Activated T-helper 1 cell treated with anti-CD3 and anti-CD28 coated beads, Interleukin-12 subunit alpha, Interleukin-12 subunit beta, Interleukin-2, Interleukin-4 antibody, amounts not matched to agents 30 ng/mL and 10 ng/mL and 1 ng/mL, durations not matched to agents 14 hours and 24 hours and 36 hours (primary cell): ENCODE measurements at regions of chr16 and their contacts with region 1.

Region 1: DNA sequence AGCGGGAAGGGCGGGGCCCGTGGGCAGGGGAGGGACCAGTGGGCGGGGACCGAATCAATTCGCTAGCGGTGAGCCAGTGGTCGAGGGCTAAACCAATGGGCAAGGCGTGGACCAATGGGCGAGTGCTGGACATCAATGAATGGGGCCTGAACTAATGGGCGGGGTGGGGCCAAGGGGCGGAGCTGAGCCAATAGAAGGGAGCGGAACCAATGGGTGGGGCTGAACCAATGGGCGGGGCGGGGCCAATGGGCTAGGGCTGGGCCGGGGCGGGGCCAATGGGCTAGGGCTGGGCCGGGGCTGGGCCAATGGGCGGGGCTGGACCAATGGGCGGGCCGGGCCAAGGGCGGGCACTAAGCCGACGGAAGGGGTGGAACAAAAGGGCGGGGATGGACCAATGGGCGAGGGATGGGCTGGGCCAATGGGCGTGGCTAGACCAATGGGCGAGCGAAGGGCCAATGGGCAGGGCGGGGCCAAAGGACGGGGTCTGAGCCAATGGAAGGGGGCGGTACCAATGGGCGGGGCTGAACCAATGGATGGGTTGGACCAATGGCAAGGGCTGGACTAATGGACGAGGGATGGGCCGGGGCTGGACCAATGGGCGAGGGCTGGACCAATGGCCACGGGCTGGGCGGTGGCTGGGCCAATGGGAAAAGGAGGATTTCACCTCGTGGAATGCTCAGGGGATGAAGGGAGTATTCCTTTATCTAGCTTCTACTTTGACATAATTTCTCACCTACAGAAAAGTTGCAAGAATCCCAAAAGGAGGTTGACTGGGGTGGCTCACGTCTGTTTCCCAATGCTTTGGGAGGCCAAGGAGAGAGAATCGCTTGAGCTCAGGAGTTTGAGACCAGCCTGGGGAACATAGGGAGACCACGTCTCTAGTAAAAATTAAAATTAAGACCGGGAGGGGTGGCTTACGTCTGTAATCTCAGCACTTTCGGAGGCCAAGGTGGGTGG is 6.0 kb upstream of the FLYWCH1 start:
- DNase-seq: peak; percentile 95
- H3K4me3 Mint-ChIP-seq: peak overlapping the region; percentile 91
- H3K27ac Mint-ChIP-seq: peak overlapping the region; percentile 44
- H3K4me1 Mint-ChIP-seq: peaks cover 17% of the 10 kb centered on the region
- H3K27me3 Mint-ChIP-seq: peaks cover 4% of the 10 kb centered on the region

Region 2: GRCh38 chr16:2682209-2683021 is 223.3 kb before region 1 on chr16 and contains the start of gene KCTD5:
- intact Hi-C with region 1: no loop called
- DNase-seq: peak; percentile 96
- H3K4me3 Mint-ChIP-seq: peak within 1 kb of the TSS; percentile 99
- H3K27ac Mint-ChIP-seq: peak within 1 kb of the TSS; percentile 97
- H3K4me1 Mint-ChIP-seq: peaks cover 13% of the 10 kb centered on the region
- H3K27me3 Mint-ChIP-seq: peaks cover 2% of the 10 kb centered on the region
- total RNA-seq, gene KCTD5: 63.9 and 69.6 TPM in 2 replicates

Region 3: DNA sequence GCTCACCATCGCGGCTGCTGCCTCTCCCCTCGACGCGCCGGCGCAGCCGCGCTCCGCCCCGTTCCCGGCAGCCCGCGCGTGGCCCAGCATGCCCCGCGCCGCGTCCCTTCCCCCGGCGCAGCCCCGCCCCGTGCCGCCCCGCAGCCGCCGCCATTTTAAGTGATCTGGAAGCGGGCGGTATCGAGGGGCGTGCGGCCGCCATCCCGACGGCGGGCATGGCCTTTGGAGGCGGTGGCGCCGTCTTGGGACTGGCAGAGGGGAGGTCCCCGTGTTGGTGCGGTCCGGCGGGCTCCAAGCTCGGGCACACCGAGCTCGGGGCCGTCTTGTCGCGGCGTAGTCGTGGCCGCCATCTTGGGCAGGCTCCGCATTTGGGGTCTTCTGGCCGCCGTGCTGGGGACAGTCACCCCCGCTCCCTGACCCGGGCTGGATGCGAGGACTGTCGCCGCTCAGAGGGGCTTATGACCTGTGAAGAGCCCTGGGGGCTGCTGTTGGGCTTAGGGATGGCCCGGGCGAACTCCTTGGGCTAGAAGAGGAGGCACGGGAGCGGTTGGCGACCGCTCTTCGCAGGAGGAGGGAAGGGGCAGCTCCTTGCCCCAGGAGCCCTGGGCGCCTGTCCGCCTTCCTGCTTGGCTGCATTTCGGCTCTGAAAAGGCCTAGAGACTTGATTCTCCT is 128.3 kb before region 1 on chr16 and contains the start of gene ELOB:
- intact Hi-C with region 1: loop called (anchors 2 kb)
- DNase-seq: peak; percentile 87
- H3K4me3 Mint-ChIP-seq: peak within 1 kb of the TSS; percentile 93
- H3K27ac Mint-ChIP-seq: peak within 1 kb of the TSS; percentile 94
- H3K4me1 Mint-ChIP-seq: peaks cover 27% of the 10 kb centered on the region
- H3K27me3 Mint-ChIP-seq: no peaks in the 10 kb centered on the region
- total RNA-seq, gene ELOB: 256 and 277 TPM in 2 replicates

Region 4: DNA sequence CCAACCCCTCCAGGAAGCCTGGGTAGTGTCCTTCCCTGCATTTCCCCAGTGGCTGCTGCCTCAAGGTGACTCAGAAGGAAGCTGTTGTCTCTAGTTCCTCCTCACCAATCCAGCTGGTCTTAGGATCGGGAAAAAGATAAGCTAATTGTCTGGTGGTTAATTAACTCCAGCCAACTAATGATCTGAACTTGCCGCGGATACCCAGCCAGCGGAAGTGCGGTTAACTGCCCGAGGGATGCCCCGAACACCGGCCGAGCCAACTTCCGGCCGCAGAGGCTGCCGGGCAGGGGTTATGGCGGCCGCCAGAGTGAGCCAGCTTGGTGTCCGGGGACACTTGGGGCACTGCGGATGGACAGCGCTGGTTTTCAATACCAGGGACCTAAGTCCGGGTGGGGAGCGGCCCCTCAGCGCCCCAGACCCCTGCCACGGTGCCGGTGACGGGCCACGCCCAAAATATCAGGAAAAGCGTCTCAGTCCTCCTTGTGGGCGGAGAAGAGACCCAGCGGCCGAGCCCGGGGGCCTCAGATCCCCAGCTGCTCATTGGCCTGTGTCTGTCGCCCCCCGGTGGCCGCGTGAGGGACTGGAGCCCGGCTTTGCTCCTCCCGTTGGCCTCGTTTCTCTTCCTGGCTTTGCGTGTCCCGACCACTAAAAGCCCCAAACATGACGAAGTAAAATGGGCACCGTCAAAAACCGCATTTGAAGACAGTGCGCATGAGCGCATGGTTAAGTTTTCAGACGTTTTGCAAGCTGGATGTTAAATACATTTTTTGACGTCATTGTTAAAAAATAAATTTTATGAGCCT is 37.5 kb before region 1 on chr16:
- intact Hi-C with region 1: loop called (anchors 1 kb)
- DNase-seq: peak; percentile 92
- H3K4me3 Mint-ChIP-seq: peak overlapping the region; percentile 89
- H3K27ac Mint-ChIP-seq: peak overlapping the region; percentile 84
- H3K4me1 Mint-ChIP-seq: peaks cover 4% of the 10 kb centered on the region
- H3K27me3 Mint-ChIP-seq: peaks cover 6% of the 10 kb centered on the region

Region 5: DNA sequence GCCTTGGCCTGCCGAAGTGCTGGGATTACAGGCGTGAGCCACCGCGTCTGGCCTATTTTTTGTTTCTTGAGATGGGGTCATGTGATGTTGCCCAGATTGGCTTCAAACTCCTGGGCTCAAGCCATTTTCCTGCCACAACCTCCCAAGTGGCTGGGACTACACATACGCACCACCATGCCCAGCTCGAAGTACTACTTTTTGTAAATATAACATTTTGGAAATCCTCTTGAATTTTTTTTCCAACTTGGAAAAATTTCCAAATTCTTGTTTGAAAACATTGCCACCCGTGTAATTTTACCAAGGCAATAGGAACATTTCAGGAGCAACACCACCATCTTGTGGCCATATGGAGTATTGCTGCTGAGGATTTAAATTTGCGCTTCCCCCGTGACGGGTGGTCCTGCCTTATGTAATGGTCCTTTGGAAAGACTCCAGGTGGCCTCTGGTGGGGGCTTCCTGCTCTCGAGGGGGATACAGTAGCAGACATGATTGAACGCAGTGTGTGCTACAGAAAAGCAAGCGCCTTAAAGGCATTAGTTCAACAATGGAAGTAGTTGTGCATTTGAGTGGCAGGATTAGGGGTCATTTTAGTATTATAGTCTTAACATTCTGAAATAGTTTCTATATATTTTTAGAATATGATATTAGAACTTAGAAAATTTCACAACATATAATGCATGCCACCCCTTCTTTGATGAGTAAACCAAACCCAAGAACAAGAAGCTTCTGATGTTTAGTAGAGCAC is 14.0 kb after region 1 on chr16:
- intact Hi-C with region 1: loop called (anchors 1 kb)
- DNase-seq: peak; percentile 43
- H3K4me3 Mint-ChIP-seq: no peak overlapping the region
- H3K27ac Mint-ChIP-seq: no peak overlapping the region
- H3K4me1 Mint-ChIP-seq: peaks cover 12% of the 10 kb centered on the region
- H3K27me3 Mint-ChIP-seq: no peaks in the 10 kb centered on the region

Region 6: DNA sequence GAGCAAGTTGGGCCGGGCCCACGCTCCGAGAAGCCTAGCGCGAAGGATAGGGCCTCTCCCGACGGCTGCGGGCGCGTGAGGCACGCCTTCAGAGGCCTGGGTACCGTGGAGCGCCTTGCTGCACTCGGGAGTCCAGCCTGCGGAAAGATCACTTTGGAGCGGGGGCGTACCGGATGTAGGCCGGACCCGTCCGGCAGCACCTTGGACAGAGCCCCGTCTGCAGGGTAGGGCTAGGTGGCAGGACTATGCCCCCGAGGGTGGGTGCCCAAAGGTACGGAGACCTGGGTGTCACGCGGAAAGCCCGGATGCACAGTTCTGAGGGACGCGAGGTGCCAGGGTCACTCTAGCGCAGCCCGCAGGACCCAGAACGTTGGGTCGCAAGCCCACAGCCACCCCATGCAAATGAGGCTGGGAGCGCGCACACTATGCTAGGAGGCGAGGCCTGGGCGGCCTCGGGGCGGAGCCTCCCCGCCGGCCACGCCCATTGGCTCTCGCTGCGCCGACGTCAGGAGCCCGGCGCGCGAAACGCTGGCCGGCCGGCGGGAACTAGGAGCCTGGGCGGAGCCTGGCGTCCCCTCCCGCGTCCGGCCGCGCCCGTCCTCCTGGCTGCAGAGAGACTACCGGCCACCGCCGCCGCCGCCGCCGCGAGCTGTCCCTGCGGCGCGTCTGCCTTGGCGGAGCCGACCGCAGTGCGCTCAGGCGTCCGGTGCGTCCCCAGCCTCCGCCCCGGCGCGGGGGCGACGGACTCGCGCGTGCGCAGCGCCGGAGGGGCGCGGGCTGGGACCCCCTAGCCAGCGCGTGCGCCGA is 63.2 kb after region 1 on chr16 and contains the start of gene PAQR4:
- intact Hi-C with region 1: loop called (anchors 2 kb)
- DNase-seq: peak; percentile 85
- H3K4me3 Mint-ChIP-seq: peak within 1 kb of the TSS; percentile 78
- H3K27ac Mint-ChIP-seq: peak within 1 kb of the TSS; percentile 52
- H3K4me1 Mint-ChIP-seq: peaks cover 22% of the 10 kb centered on the region
- H3K27me3 Mint-ChIP-seq: peaks cover 17% of the 10 kb centered on the region
- total RNA-seq, gene PAQR4: 40.1 and 44.0 TPM in 2 replicates

Region 7: DNA sequence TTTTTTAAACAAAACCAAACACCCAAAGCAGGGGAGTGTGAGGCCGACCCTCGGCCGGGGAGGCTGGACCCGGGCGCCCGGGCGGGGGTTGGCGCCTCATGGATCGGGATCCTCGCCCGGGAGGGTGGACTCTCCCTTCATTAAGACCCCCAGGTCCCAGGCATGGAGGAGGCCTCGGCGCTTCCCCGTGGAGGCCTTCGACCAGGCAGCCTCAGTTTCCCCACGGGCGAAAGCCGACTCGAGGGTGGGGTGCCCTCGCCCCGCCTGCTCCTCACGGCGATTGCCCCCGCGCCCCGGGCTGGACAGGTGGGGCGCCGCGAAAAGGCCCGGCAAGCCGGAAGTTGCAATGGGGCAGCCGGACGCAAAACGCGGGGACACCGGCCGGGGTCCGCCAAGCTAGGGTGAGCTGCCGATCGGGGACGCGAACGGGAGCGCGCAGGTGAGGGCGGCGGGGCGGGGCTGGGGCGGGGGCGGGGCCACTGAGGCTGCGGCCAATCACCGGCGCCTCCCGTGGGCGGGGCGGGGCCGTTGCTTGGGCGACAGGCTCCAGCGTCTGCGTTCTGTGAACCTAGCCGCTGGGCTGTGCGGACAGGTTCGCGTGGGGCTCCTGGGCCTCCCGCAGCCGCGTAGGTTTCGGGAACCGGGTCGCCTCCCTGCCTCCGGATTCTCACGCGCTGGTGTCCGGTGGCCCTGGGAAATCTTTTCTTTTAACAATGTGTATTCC is 200.7 kb after region 1 on chr16:
- intact Hi-C with region 1: loop called (anchors 10 kb)
- DNase-seq: peak; percentile 88
- H3K4me3 Mint-ChIP-seq: peak overlapping the region; percentile 85
- H3K27ac Mint-ChIP-seq: peak overlapping the region; percentile 95
- H3K4me1 Mint-ChIP-seq: peaks cover 22% of the 10 kb centered on the region
- H3K27me3 Mint-ChIP-seq: no peaks in the 10 kb centered on the region

Region 8: GRCh38 chr16:3242709-3243108 is 337.0 kb after region 1 on chr16:
- intact Hi-C with region 1: no loop called
- DNase-seq: no peak
- H3K4me3 Mint-ChIP-seq: no peak overlapping the region
- H3K27ac Mint-ChIP-seq: no peak overlapping the region
- H3K4me1 Mint-ChIP-seq: no peaks in the 10 kb centered on the region
- H3K27me3 Mint-ChIP-seq: peaks cover 2% of the 10 kb centered on the region